ENCODE measurements at regions of chr16 and their contacts with region 1.

Region 1: GRCh38 chr16:81723098-81723723 is 55.9 kb upstream of the PLCG2 start:
- DNase-seq: peak; percentile 72
- H3K4me3 ChIP-seq: no peak overlapping the region
- H3K27ac ChIP-seq: no peak overlapping the region
- H3K4me1 ChIP-seq: no peaks in the 10 kb centered on the region
- H3K27me3 ChIP-seq: no peaks in the 10 kb centered on the region
- CTCF ChIP-seq: peak; percentile 66

Region 2: GRCh38 chr16:81403616-81404373 is 319.4 kb before region 1 on chr16:
- intact Hi-C with region 1: loop called (anchors 2 kb)
- DNase-seq: peak; percentile 89
- H3K4me3 ChIP-seq: peak overlapping the region; percentile 13
- H3K27ac ChIP-seq: no peak overlapping the region
- H3K4me1 ChIP-seq: peaks cover 4% of the 10 kb centered on the region
- H3K27me3 ChIP-seq: no peaks in the 10 kb centered on the region
- CTCF ChIP-seq: peak; percentile 89

Region 3: DNA sequence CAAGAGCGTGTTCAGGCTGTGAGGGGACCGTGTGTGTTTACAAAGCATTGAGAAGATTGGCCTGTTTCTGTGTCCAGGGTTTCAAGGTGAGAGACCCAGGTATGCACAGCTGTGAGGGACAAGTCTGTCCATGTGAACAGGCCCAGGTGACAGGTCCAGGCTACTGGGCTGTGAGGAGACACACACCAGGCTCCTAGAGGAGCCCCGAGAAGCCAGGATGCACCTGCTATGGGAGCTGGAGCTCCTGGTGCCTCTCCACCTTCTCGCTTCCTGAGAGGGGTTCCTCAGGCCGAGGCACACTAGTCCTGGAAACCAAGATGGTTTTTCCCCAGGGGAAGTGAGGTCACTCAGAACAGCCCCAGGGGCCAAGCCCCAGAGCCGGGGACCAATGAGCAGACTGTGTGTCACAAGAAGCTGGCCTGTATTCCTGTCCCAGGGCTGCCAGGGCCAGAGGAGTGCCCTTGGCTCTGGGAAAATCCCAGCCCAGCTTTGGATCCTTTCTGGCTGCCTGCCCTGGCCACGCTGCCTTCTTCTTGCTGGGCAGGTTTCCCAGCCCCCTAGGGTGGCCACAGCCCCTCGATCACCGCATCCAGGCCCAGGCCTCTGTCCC is 97.6 kb before region 1 on chr16:
- intact Hi-C with region 1: loop called (anchors 5 kb)
- DNase-seq: peak; percentile 38
- H3K4me3 ChIP-seq: no peak overlapping the region
- H3K27ac ChIP-seq: no peak overlapping the region
- H3K4me1 ChIP-seq: peaks cover 7% of the 10 kb centered on the region
- H3K27me3 ChIP-seq: no peaks in the 10 kb centered on the region
- CTCF ChIP-seq: no peak

Measured in colonic mucosa (tissue), 4 donors.